MCF 10A (cell line): ENCODE measurements at regions of chr1 and their contacts with region 1.

Region 1: GRCh38 chr1:58783993-58784757 is at the start of gene JUN:
- DNase-seq: peak; percentile 99
- H3K4me3 Mint-ChIP-seq: peak within 1 kb of the TSS; percentile 91
- H3K27ac Mint-ChIP-seq: peak within 1 kb of the TSS; percentile 98
- H3K4me1 Mint-ChIP-seq: peaks cover 21% of the 10 kb centered on the region
- H3K27me3 Mint-ChIP-seq: no peaks in the 10 kb centered on the region
- CTCF ChIP-seq: no peak
- total RNA-seq, gene JUN: 60.6 and 71.5 TPM in 2 replicates

Region 2: GRCh38 chr1:58679463-58679862 is 104.7 kb before region 1 on chr1:
- CTCF ChIA-PET with region 1: no interaction called
- POLR2A ChIA-PET with region 1: no interaction called
- intact Hi-C with region 1: no loop called
- DNase-seq: no peak
- H3K4me3 Mint-ChIP-seq: no peak overlapping the region
- H3K27ac Mint-ChIP-seq: no peak overlapping the region
- H3K4me1 Mint-ChIP-seq: peaks cover 14% of the 10 kb centered on the region
- H3K27me3 Mint-ChIP-seq: no peaks in the 10 kb centered on the region
- CTCF ChIP-seq: no peak

Region 3: GRCh38 chr1:58768971-58769808 is 15.0 kb before region 1 on chr1:
- CTCF ChIA-PET with region 1: interaction called, 22 read pairs
- POLR2A ChIA-PET with region 1: interaction called, 20 read pairs
- intact Hi-C with region 1: no loop called
- DNase-seq: peak; percentile 78
- H3K4me3 Mint-ChIP-seq: no peak overlapping the region
- H3K27ac Mint-ChIP-seq: no peak overlapping the region
- H3K4me1 Mint-ChIP-seq: peaks cover 29% of the 10 kb centered on the region
- H3K27me3 Mint-ChIP-seq: no peaks in the 10 kb centered on the region
- CTCF ChIP-seq: peak; percentile 67

Region 4: GRCh38 chr1:58922302-58923089 is 138.3 kb after region 1 on chr1:
- CTCF ChIA-PET with region 1: interaction called, 6 read pairs
- POLR2A ChIA-PET with region 1: interaction called, 18 read pairs
- intact Hi-C with region 1: no loop called
- DNase-seq: peak; percentile 91
- H3K4me3 Mint-ChIP-seq: peak overlapping the region; percentile 7
- H3K27ac Mint-ChIP-seq: peak overlapping the region; percentile 87
- H3K4me1 Mint-ChIP-seq: peaks cover 52% of the 10 kb centered on the region
- H3K27me3 Mint-ChIP-seq: no peaks in the 10 kb centered on the region
- CTCF ChIP-seq: no peak

Region 5: DNA sequence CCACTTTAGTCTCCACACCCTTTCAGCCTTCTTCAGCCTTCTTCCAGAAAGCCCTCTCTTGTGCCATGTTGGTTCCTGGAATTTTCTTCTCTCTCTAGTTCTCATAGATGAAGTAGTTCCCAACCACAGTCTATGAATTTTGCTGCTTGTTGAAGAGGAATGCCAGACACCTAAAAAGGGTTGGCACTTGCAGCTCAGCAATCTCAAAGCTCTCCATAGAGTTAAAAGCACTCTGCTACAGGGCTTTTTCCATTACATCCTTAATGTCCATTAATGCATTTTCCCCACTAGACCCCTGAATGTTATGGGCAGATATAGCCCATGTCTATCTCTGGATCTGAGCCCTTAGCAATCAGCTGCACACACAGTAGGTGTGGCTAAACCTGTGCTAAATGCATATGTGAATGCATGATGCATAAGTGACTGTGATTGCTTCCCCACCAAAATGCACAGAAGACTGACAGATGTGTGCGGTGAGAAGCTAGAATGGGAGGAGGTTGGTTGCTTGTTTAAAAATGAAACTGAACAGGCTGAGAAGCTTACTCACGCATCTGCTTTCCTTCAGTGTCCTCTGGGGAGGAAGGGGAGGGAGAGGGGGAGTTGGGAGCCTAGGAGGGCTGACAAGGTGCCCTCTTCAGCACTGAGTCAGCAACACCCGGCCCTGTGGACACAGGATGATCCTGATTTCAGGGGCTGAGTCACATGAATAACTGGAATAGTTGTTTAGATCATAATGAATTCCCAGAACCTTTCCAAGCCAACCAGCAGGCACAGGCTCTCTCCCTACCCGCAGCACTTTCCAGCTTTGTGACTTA is 366.6 kb after region 1 on chr1:
- CTCF ChIA-PET with region 1: no interaction called
- POLR2A ChIA-PET with region 1: interaction called, 11 read pairs
- intact Hi-C with region 1: loop called (anchors 10 kb)
- DNase-seq: peak; percentile 96
- H3K4me3 Mint-ChIP-seq: peak overlapping the region; percentile 65
- H3K27ac Mint-ChIP-seq: peak overlapping the region; percentile 86
- H3K4me1 Mint-ChIP-seq: peaks cover 22% of the 10 kb centered on the region
- H3K27me3 Mint-ChIP-seq: no peaks in the 10 kb centered on the region
- CTCF ChIP-seq: no peak

Region 6: GRCh38 chr1:59498640-59499039 is 714.5 kb after region 1 on chr1:
- CTCF ChIA-PET with region 1: no interaction called
- POLR2A ChIA-PET with region 1: interaction called, 4 read pairs
- intact Hi-C with region 1: loop called (anchors 2 kb)
- DNase-seq: peak; percentile 35
- H3K4me3 Mint-ChIP-seq: no peak overlapping the region
- H3K27ac Mint-ChIP-seq: peak overlapping the region; percentile 90
- H3K4me1 Mint-ChIP-seq: peaks cover 31% of the 10 kb centered on the region
- H3K27me3 Mint-ChIP-seq: no peaks in the 10 kb centered on the region
- CTCF ChIP-seq: no peak

Region 7: GRCh38 chr1:59759156-59759925 is 975.2 kb after region 1 on chr1:
- CTCF ChIA-PET with region 1: interaction called, 10 read pairs
- POLR2A ChIA-PET with region 1: interaction called, 98 read pairs
- intact Hi-C with region 1: loop called (anchors 2 kb)
- DNase-seq: peak; percentile 85
- H3K4me3 Mint-ChIP-seq: peak overlapping the region; percentile 38
- H3K27ac Mint-ChIP-seq: no peak overlapping the region
- H3K4me1 Mint-ChIP-seq: peaks cover 28% of the 10 kb centered on the region
- H3K27me3 Mint-ChIP-seq: no peaks in the 10 kb centered on the region
- CTCF ChIP-seq: peak; percentile 96